ENCODE measurements at regions of chr17 and their contacts with region 1.

Region 1: DNA sequence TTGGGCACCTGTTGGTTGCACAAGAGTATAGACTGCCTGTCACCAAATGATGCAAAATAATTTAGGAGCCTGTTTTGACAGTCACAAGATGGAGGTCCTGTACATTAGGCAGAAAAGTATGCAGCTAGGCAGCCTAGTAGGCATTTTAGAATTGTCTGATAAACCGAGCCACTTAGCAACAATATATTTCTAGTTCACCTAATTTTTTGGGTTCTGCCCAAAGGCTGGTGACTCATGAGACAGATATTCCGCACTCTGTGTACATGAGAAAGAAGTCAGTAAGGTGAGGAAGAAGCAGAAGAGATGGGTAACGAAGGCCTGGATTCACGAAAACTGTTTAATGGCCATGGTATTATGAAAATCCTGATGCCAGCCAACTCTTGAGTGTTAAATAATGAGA is 7.2 kb downstream of the ACACA start:
- DNase-seq: no peak
- ATAC-seq: no peak
- H3K4me3 Mint-ChIP-seq: no peak overlapping the region
- H3K27ac Mint-ChIP-seq: no peak overlapping the region
- H3K4me1 Mint-ChIP-seq: peaks cover 25% of the 10 kb centered on the region
- H3K27me3 Mint-ChIP-seq: no peaks in the 10 kb centered on the region

Region 2: DNA sequence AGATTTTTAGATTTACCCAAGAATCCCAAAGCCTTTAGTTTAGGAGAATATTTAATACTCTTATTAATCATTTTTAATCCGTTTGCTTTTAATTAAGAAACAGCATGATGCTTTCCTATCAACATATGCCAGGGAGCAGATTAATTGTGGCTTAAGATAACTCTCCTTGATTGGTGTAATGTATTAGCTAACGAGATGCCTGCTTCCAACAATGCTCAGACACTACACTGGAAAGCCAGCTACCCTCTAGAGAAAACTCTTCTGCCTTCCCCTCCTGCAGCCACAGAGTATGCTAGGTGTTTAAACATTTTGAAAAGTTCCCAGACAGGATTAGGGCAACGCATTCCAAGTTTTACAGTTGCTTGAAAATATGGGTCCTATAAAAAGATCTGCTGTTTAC is 308.5 kb before region 1 on chr17:
- CTCF ChIA-PET with region 1: no interaction called
- POLR2A ChIA-PET with region 1: interaction called, 11 read pairs
- intact Hi-C with region 1: no loop called
- DNase-seq: no peak
- ATAC-seq: no peak
- H3K4me3 Mint-ChIP-seq: no peak overlapping the region
- H3K27ac Mint-ChIP-seq: peak overlapping the region; percentile 29
- H3K4me1 Mint-ChIP-seq: peaks cover 35% of the 10 kb centered on the region
- H3K27me3 Mint-ChIP-seq: no peaks in the 10 kb centered on the region

Region 3: GRCh38 chr17:37344519-37344918 is 54.9 kb before region 1 on chr17:
- CTCF ChIA-PET with region 1: no interaction called
- POLR2A ChIA-PET with region 1: no interaction called
- intact Hi-C with region 1: loop called in 1 of 2 experiments (anchors 5 kb)
- DNase-seq: no peak
- ATAC-seq: peak; percentile 64
- H3K4me3 Mint-ChIP-seq: peak overlapping the region; percentile 28
- H3K27ac Mint-ChIP-seq: peak overlapping the region; percentile 68
- H3K4me1 Mint-ChIP-seq: peaks cover 11% of the 10 kb centered on the region
- H3K27me3 Mint-ChIP-seq: no peaks in the 10 kb centered on the region